PC-9 (cell line): ENCODE measurements at regions of chr2 and their contacts with region 1.

Region 1: DNA sequence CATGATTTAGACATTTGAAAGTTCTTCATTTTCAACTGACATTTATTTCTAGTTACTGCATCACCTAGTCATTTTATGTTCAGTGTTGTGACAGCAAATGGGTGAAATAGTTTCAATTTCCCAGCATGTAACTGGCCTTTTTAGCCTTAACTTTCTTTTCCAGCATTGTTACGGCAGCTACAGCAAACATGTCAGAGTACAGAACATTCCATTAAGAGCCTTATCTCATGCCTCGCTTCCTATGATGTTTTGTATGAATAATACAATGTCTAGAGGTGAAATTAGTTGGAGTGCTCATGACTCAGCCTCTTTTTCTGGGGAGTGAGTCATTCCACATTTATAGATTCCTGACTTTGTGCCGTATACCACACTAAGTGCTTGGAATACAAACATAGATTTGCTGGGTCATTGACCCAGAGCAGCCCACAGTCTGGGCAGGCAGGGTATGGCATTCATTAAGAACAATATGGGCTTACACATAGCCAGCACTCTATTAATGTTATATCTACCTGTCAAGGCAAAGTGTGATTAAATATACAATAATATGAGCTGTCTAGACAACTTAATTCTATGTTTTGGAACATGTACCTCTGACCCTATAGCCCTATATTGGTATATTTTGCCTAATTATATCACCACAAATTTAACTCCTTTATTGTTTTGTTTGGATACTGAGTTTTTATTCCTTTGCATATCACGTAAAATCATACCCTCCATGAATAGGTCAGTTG is 72.2 kb downstream of the MAP2 start:
- DNase-seq: peak; percentile 55 to 92
- H3K4me3 ChIP-seq: no peak overlapping the region
- H3K27ac ChIP-seq: peak overlapping the region; percentile 71
- H3K4me1 ChIP-seq: peaks cover 18% of the 10 kb centered on the region
- H3K27me3 ChIP-seq: no peaks in the 10 kb centered on the region
- CTCF ChIP-seq: no peak

Region 2: DNA sequence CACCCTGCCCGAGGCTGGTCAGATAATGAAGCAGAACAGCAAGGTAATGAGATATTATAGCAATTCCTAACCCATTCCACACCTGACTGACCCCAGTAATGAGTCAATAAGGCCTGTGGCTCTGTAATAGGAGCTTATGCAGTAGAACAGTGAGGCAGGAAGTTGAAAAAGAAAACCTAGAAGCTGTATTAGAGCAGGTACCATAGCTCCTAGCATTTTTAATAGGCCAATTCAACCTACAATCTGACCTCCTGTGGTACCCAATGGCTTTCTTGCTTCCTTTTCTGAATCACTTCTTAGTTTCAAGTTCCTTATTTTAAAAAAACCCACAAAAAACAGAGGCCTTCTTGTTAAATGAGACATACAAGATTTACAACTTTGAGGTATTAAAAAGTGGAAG is 115.7 kb before region 1 on chr2:
- CTCF ChIA-PET with region 1: no interaction called
- POLR2A ChIA-PET with region 1: no interaction called
- intact Hi-C with region 1: loop called (anchors 5 kb)
- DNase-seq: peak in 1 of 2 experiments; percentile 42
- H3K4me3 ChIP-seq: no peak overlapping the region
- H3K27ac ChIP-seq: peak overlapping the region; percentile 39; the same call in 1 of the 2 replicates
- H3K4me1 ChIP-seq: peaks cover 19% of the 10 kb centered on the region
- H3K27me3 ChIP-seq: no peaks in the 10 kb centered on the region
- CTCF ChIP-seq: no peak

Region 3: DNA sequence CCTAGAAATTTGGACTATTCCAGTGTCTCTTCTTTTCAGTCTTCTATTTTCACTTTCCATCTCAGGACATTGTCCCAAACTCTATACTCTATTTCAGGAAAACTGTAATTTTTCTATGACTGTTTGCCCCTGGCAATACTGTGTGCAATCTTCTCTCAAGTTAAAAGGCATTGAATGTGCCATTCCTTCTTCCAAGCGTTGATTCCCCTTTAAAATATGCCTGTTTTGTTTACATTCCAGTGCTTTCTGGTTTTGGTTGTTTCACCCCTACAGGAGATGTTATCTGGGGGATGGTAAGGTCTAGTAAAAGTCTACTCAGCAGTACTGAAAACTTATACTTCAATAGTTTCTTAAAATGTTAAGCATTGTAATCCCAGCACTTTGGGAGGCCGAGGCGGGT is 77.0 kb before region 1 on chr2:
- CTCF ChIA-PET with region 1: no interaction called
- POLR2A ChIA-PET with region 1: no interaction called
- intact Hi-C with region 1: no loop called
- DNase-seq: no peak
- H3K4me3 ChIP-seq: no peak overlapping the region
- H3K27ac ChIP-seq: no peak overlapping the region
- H3K4me1 ChIP-seq: no peaks in the 10 kb centered on the region
- H3K27me3 ChIP-seq: no peaks in the 10 kb centered on the region
- CTCF ChIP-seq: no peak

Region 4: GRCh38 chr2:209431701-209432100 is 64.3 kb before region 1 on chr2:
- CTCF ChIA-PET with region 1: no interaction called
- POLR2A ChIA-PET with region 1: no interaction called
- intact Hi-C with region 1: loop called (anchors 1 kb)
- DNase-seq: peak; percentile 52 to 66
- H3K4me3 ChIP-seq: no peak overlapping the region
- H3K27ac ChIP-seq: peak overlapping the region; percentile 78
- H3K4me1 ChIP-seq: peaks cover 22% of the 10 kb centered on the region
- H3K27me3 ChIP-seq: no peaks in the 10 kb centered on the region
- CTCF ChIP-seq: no peak

Region 5: DNA sequence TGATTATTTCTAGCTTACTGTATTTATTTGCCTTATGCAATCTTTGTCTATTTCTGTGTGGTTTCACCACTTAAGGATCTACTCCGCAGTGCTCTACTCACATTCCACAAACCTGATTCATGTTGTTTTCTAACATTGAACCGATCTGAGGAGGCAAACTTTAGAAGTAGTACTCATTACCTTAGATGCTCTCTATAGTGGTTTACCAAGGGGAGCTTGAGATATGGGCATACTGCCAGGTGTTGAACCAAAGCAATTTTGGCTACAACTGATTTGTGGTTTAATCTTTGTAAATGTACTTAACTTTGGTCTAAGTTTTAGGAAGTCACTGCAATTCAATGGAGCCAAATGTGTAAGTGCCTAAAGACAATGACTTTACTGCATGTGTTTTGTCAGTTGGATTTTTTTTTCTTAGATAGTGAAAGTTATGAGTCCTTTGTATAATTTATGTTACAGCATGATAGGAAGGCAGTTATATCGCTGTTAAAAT is 22.0 kb before region 1 on chr2:
- CTCF ChIA-PET with region 1: no interaction called
- POLR2A ChIA-PET with region 1: no interaction called
- intact Hi-C with region 1: loop called (anchors 1 kb)
- DNase-seq: peak; percentile 49 to 70
- H3K4me3 ChIP-seq: no peak overlapping the region
- H3K27ac ChIP-seq: peak overlapping the region; percentile 81
- H3K4me1 ChIP-seq: peaks cover 24% of the 10 kb centered on the region
- H3K27me3 ChIP-seq: no peaks in the 10 kb centered on the region
- CTCF ChIP-seq: no peak